ENCODE measurements at regions of chr6 and their contacts with region 1.

Region 1: GRCh38 chr6:96907498-96907897 is 9.8 kb upstream of the NDUFAF4 start:
- DNase-seq: no peak
- H3K4me3 ChIP-seq: no peak overlapping the region
- H3K27ac ChIP-seq: no peak overlapping the region
- H3K4me1 ChIP-seq: no peaks in the 10 kb centered on the region
- H3K27me3 ChIP-seq: peaks cover 8% of the 10 kb centered on the region
- CTCF ChIP-seq: no peak
- POLR2A ChIP-seq: no peak

Region 2: GRCh38 chr6:96563853-96564252 is 343.6 kb before region 1 on chr6:
- intact Hi-C with region 1: no loop called
- DNase-seq: no peak
- H3K4me3 ChIP-seq: peak overlapping the region in 1 of 4 donors; percentile 14
- H3K27ac ChIP-seq: peak overlapping the region in 1 of 5 donors; percentile 19
- H3K4me1 ChIP-seq: no peaks in the 10 kb centered on the region
- H3K27me3 ChIP-seq: no peaks in the 10 kb centered on the region
- CTCF ChIP-seq: no peak
- POLR2A ChIP-seq: no peak

Region 3: GRCh38 chr6:97059473-97059872 is 152.0 kb after region 1 on chr6:
- intact Hi-C with region 1: loop called (anchors 5 to 10 kb)
- DNase-seq: no peak
- H3K4me3 ChIP-seq: no peak overlapping the region
- H3K27ac ChIP-seq: no peak overlapping the region
- H3K4me1 ChIP-seq: no peaks in the 10 kb centered on the region
- H3K27me3 ChIP-seq: no peaks in the 10 kb centered on the region
- CTCF ChIP-seq: peak; percentile 32 to 69 (median 58)
- POLR2A ChIP-seq: no peak